Right ventricle myocardium inferior (tissue), 1 donor: ENCODE measurements at regions of chr16 and their contacts with region 1.

Region 1: GRCh38 chr16:4936991-4937781 is at the start of gene PPL:
- DNase-seq: peak; percentile 86
- ATAC-seq: peak; percentile 60
- total RNA-seq, gene PPL: 20.2 TPM

Region 2: GRCh38 chr16:4538350-4539235 is 398.6 kb before region 1 on chr16 and contains the start of gene CDIP1:
- intact Hi-C with region 1: no loop called
- DNase-seq: peak; percentile 97
- ATAC-seq: peak; percentile 96
- total RNA-seq, gene CDIP1: 46.3 TPM

Region 3: GRCh38 chr16:4882633-4883285 is 54.4 kb before region 1 on chr16:
- intact Hi-C with region 1: loop called (anchors 5 kb)
- DNase-seq: no peak
- ATAC-seq: peak; percentile 58

Region 4: GRCh38 chr16:4968879-4969456 is 31.8 kb after region 1 on chr16:
- intact Hi-C with region 1: no loop called
- DNase-seq: no peak
- ATAC-seq: no peak

Region 5: GRCh38 chr16:5393070-5393469 is 455.9 kb after region 1 on chr16:
- intact Hi-C with region 1: no loop called
- DNase-seq: no peak
- ATAC-seq: no peak